A549 (cell line): ENCODE measurements at regions of chr4 and their contacts with region 1.

Region 1: DNA sequence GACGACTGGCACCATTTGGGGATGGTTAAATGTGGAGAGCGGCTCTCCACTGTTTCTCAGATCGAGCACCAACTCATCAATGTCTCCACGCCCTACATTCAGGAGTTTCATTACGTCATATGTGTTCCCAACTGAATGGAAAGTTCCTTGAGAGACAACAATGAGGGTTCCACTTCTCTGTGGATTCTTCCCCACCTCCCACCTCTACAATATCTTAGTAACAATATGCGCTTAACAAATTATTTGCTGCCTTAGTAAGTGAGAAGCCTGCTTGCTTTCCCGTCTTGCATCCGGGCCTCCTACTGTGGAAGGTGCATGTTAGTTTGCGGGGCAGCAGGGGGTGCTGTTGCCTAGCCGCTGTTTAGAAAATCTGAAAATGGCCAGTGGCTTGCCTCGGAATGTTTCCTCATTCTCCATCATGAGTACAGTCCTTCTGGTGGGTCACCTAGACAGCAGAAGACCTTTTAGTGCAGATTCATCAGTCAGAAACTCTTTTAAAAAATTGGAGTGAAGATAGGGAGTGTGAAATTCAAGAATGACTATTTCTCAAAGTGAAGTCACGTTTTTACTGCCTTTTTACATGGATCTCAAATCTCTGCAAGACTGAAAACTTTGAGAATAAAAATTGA is 55.7 kb downstream of the PHOX2B start:
- DNase-seq: peak; percentile 28 to 61
- ATAC-seq: peak; percentile 90 to 94
- H3K4me3 ChIP-seq: no peak overlapping the region
- H3K27ac ChIP-seq: 0 out of 6 replicates have a peak overlapping the region, but pooled peaks of 1 of the 2 experiments have one; percentile 4
- H3K4me1 ChIP-seq: no peaks in the 10 kb centered on the region; the same call in 2 of the 3 replicates
- CTCF ChIP-seq: peak; percentile 72
- EP300 ChIP-seq: no peak
- POLR2A ChIP-seq: no peak
- RAD21 ChIP-seq: peak; percentile 81

Region 2: DNA sequence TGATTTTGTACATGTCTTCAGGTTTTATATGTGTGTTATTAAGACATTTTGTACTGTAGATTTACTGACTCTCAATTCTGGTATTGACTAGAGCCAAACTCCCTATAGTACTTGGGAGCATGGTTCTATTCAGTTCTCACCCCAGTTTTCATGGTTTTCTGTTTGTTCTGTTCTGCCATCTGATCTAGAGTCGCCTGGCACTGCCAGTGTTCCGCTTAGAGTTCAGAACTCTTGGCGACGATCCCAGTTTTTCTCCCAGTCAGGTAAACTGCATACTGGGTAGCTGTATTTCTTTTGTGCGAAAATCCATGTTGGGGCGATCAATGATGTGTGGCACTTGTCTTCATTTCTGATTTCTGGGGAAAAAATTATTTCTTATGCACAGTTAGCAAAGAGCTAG is 22.3 kb before region 1 on chr4:
- CTCF ChIA-PET with region 1: no interaction called
- POLR2A ChIA-PET with region 1: no interaction called
- DNase-seq: no peak
- ATAC-seq: no peak
- H3K4me3 ChIP-seq: no peak overlapping the region
- H3K27ac ChIP-seq: no peak overlapping the region
- H3K4me1 ChIP-seq: no peaks in the 10 kb centered on the region
- CTCF ChIP-seq: no peak
- EP300 ChIP-seq: no peak
- POLR2A ChIP-seq: no peak
- RAD21 ChIP-seq: no peak

Region 3: DNA sequence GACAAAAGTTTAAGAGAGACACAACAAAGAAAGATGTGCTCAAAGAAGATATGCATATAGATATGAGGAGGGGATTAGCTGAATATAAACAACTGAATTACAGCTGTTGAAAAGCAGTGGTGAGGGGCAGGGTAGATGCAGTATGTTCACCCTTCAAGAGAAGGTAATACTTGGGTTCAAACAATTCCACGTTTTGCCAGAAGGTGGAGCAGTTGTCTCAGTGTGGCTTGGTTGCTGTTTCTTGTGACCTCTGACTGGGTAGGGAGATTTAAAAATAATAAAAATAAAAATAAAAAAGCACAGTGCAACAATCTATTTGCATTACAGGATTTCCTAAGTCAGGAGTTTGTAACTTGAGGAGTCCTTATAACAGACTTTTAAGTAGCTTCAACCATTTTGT is 32.4 kb after region 1 on chr4:
- CTCF ChIA-PET with region 1: no interaction called
- POLR2A ChIA-PET with region 1: no interaction called
- DNase-seq: no peak
- ATAC-seq: no peak
- H3K4me3 ChIP-seq: no peak overlapping the region
- H3K27ac ChIP-seq: no peak overlapping the region
- H3K4me1 ChIP-seq: no peaks in the 10 kb centered on the region
- CTCF ChIP-seq: 0 out of 3 replicates have a peak, but pooled peaks have one; percentile 8
- EP300 ChIP-seq: no peak
- POLR2A ChIP-seq: no peak
- RAD21 ChIP-seq: no peak

Region 4: DNA sequence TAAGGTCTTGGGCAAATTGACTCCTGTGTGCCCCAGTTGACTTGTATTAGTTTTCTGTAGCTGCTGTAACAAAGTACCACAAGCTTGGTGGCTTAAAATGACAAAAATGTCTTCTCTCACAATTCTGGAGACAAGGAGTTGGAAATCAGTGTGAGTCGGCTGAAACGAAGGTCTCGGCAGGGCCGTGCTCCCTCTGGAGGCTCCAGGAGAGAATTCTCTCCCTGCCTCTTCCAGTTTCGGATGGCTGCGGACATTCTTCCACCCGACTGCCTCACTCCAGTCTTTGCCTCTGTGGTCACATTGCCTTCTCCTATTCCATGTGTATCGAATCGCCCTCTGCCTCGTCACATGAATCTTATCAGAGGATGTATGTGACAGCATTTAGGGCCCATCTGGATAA is 121.7 kb after region 1 on chr4:
- CTCF ChIA-PET with region 1: interaction called, 10 read pairs
- POLR2A ChIA-PET with region 1: no interaction called
- DNase-seq: peak in 1 of 2 experiments; percentile 31
- ATAC-seq: peak; percentile 73 to 77
- H3K4me3 ChIP-seq: no peak overlapping the region
- H3K27ac ChIP-seq: no peak overlapping the region
- H3K4me1 ChIP-seq: no peaks in the 10 kb centered on the region
- CTCF ChIP-seq: peak; percentile 22; the same call in 2 of the 3 replicates
- EP300 ChIP-seq: no peak
- POLR2A ChIP-seq: no peak
- RAD21 ChIP-seq: no peak; a peak in 2 of 5 replicates

Region 5: DNA sequence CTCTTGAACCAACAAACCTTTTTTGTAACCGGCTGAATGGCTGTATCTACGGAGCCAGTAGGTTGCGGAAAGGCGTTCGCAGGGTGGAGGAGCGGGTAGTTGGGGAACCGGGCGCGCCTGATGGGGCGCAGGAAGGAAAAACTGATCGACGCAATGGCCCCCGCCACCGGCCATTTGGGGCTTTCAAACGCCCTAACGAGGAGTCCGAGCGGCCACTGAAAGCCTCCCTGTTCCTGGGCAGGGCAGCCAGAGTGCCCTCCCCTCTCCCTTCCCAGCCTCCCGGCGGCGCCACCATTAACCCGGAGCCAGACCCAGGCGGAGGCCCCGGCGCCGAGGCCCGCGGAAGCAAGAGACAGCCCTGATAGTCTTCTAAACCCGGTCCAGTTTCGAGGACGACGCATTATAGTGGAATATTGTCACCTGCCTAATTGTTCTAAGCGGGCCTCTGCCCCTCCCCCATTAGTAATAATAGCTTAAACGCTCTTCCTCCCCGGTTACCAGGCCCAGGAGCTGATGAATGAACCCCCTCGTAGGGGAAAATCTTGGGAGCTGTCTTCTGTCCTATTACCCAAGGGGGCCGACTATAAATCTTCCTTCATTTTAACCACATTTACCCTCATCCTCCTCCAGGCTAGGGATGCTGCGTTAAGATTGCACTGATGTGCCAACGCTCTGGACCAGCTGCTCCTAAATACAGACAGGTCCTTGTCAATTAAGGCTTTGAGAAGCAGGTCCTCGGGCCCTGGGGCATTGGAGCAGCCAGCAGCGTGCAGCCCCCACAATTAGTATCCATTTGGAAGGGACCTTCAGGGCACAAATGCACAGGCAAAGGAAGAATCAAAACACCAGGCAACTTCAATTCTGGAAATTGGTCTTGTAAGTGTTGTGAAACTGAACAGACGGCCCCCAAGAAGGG is 180.8 kb after region 1 on chr4:
- CTCF ChIA-PET with region 1: interaction called, 18 read pairs
- POLR2A ChIA-PET with region 1: no interaction called
- DNase-seq: no peak
- ATAC-seq: no peak
- H3K4me3 ChIP-seq: no peak overlapping the region
- H3K27ac ChIP-seq: no peak overlapping the region
- H3K4me1 ChIP-seq: no peaks in the 10 kb centered on the region
- CTCF ChIP-seq: no peak
- EP300 ChIP-seq: no peak
- POLR2A ChIP-seq: no peak
- RAD21 ChIP-seq: no peak

Region 6: GRCh38 chr4:41887821-41888686 is 195.2 kb after region 1 on chr4:
- CTCF ChIA-PET with region 1: interaction called, 65 read pairs
- POLR2A ChIA-PET with region 1: no interaction called
- DNase-seq: peak in 1 of 2 experiments; percentile 42
- ATAC-seq: no peak
- H3K4me3 ChIP-seq: no peak overlapping the region
- H3K27ac ChIP-seq: no peak overlapping the region
- H3K4me1 ChIP-seq: no peaks in the 10 kb centered on the region
- CTCF ChIP-seq: peak; percentile 83
- EP300 ChIP-seq: no peak
- POLR2A ChIP-seq: no peak
- RAD21 ChIP-seq: peak; percentile 62 to 67